ENCODE measurements at regions of chr11 and their contacts with region 1.

Region 1: DNA sequence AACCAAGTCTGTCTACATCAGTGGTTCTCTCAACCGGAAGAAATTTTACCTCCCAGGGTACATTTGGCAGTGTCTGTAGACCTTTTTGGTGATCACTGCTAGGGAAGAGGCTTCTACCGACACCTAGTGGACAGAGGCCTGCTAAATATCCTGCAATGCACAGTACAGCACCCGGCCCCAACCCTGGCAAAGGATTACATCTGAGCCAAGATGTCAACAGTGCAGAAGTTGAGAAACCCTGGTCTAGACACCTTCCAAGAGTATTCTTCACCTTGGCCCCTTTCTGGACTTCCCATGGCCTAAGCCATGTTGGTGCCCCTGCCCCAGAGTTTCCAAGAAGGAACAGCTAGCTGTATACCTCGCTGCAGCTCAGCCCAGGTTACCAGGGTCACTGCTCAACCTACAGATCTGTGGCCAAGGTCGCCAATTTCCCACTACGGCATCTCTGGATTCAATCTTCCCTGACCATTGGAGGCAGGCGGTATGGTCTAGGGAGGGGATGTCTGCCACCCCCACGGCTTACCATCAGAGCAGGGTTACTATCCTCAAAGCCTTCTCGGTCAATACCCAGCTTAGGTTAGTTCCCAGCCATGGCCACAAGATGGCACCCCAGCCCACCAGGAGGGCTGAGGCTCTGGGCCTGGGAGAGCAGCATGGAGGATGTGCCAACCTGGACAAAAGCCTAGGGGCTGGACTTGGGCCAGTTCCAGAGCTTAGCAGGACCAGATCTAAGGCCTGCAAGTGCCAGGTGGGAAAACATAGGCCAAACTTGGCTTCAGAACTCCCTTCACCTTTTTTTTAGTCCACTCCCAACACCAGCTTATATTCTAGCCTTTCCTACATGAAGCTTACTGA is 3.7 kb upstream of the KCNC1 start:
- DNase-seq: peak; percentile 84
- CTCF ChIP-seq: peak; percentile 93

Region 2: DNA sequence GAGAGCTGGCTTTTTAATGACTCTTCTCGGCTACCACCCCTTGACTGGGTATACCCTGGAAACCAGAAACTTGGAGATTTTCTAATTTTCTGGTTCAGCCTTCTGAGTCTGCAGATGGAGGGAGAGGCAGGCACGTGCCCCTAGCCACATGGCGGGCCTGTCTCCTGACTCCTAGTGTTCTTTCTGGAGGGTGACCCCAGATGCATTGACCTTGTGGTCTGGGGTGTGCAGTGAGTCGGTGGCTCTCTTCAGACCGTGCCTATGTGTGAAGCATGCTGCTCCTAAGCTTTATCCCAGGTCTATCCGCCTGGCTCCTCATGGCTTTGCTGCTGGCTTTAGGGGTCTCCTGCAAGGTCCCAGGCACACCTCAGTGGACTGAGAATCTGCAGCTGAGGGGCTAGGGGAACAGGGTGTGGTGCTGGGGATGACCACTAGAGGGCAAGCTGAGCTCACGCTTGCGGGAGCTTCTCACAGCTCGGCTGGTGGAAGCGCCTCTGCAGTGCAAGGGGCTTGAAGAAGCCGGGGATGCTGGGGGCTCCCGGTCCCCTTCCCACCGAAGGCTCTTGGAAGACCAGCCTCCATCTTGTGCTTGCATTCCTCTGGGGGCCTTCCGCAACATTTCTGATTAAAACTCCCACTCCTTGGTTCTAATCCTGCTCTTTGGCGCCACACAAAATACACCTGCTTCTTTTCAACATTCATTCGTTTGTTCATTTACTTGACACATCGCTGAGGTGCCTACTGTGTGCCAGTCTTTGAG is 132.0 kb before region 1 on chr11:
- CTCF ChIA-PET with region 1: interaction called, 29 read pairs
- POLR2A ChIA-PET with region 1: interaction called, 3 read pairs
- DNase-seq: peak; percentile 79
- CTCF ChIP-seq: peak; percentile 99

Region 3: DNA sequence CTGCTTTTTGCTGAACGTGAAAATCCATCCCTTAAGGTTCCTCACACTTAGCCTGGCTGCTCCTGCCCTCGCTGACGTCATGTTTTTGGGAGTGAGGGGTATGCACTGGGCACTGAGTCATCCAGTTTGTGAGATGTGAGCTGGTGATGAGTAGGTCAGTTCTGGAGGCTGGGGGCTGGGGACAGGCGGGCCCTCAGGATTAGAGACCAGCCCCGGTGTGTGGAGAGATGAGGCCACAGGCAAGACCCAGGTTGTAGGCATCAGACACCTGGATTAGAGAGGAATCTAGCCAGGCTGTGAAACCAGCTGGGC is 12.9 kb after region 1 on chr11:
- CTCF ChIA-PET with region 1: interaction called, 38 read pairs
- POLR2A ChIA-PET with region 1: no interaction called
- DNase-seq: no peak
- CTCF ChIP-seq: no peak

Region 4: GRCh38 chr11:17864478-17864941 is 133.7 kb after region 1 on chr11:
- CTCF ChIA-PET with region 1: interaction called, 12 read pairs
- POLR2A ChIA-PET with region 1: no interaction called
- DNase-seq: no peak
- CTCF ChIP-seq: peak; percentile 59

Region 5: DNA sequence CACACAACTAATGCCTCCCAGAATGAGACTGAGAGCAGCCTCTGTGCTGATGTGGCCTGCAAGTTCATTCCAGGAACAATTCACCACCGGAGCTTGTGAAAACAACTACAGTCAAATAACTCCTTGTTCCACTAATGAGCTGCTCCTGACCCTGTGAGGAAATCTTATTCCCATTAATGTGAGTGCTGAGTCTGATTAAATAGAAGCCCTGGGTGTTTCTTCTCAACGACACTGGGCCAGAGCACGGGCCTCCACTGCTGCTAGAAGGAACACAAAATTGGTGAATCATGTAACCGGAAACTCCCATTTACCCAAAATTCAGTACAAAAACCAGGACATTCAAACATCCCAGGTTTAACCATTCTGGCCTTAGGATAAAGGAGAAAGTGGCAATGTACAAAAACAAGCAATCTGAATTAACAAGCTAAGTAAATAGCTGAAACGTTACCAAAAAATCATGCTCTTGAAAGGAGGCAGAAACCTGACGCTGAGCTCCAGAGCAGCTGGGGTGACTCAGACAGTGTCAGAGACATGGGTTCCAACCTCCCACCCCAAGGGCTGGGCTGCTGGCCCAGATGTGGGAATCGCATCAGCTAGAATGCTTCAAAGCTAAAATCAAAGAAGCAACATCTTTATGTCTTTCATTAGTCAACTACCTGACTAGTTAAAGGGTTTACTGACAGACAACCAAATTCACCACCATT is 255.3 kb after region 1 on chr11:
- CTCF ChIA-PET with region 1: interaction called, 290 read pairs
- POLR2A ChIA-PET with region 1: no interaction called
- DNase-seq: no peak
- CTCF ChIP-seq: no peak

Region 6: GRCh38 chr11:18105802-18106574 is 375.2 kb after region 1 on chr11 and contains the start of gene SAAL1:
- CTCF ChIA-PET with region 1: interaction called, 14 read pairs
- POLR2A ChIA-PET with region 1: no interaction called
- DNase-seq: peak; percentile 93
- CTCF ChIP-seq: peak; percentile 96

Measured in GM10248 (cell line).